ENCODE measurements at regions of chr22 and their contacts with region 1.

Region 1: GRCh38 chr22:19730655-19731360 is 7.5 kb downstream of the GP1BB start:
- DNase-seq: peak; percentile 87 to 93
- ATAC-seq: peak; percentile 89 to 97 (median 91)
- H3K4me3 ChIP-seq: peak overlapping the region; percentile 57
- H3K27ac ChIP-seq: no peak overlapping the region
- H3K4me1 ChIP-seq: no peaks in the 10 kb centered on the region
- H3K27me3 ChIP-seq: no peaks in the 10 kb centered on the region
- CTCF ChIP-seq: peak; percentile 95

Region 2: DNA sequence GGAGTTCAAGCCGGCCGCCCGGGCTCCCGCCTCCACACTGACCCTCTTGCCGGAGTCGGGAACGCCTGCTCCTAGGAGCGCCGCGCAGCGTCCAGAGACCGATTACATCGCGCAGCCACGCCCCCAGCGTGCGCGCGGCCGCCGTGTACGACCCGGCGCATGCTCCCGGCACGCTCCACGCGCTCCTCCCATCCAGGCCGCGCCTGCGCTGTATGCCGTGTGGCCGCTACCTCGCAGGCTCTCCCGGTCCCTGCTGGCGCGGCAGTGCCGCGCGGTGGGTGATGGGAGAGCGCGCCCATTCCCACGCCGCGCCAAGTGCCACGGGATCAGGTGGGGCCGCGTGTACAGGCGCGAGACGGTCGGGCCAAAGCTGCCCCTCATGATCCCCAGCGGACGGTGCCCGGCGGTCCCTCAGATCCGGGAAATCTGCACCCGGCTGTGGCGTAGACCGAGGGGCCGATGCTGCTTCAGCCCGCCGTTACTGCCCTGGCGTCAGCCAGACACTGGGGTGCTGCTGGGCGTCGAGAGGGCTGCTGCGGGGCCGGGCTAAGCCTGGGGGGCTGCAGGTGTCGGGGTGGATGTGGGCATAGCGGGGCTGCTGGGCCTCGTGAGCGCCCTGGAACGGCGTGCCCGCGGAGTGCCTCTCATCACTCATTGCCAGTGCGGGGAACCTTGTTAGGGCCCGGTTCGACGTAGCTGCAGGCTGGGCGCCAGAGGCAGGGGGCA is 124.1 kb after region 1 on chr22 and contains the starts of genes GNB1L and RTL10:
- intact Hi-C with region 1: loop called in 1 of 2 experiments (anchors 5 kb)
- DNase-seq: peak; percentile 98 to 99
- ATAC-seq: peak; percentile 97 to 98 (median 97)
- H3K4me3 ChIP-seq: peak within 1 kb of the TSS; percentile 75
- H3K27ac ChIP-seq: peak within 1 kb of the TSS; percentile 89
- H3K4me1 ChIP-seq: peaks cover 15% of the 10 kb centered on the region
- H3K27me3 ChIP-seq: no peaks in the 10 kb centered on the region
- CTCF ChIP-seq: no peak
- total RNA-seq, gene GNB1L: 1.5 to 3.4 (median 3.0) TPM
- total RNA-seq, gene RTL10: 5.3 to 9.7 (median 8.1) TPM

Region 3: DNA sequence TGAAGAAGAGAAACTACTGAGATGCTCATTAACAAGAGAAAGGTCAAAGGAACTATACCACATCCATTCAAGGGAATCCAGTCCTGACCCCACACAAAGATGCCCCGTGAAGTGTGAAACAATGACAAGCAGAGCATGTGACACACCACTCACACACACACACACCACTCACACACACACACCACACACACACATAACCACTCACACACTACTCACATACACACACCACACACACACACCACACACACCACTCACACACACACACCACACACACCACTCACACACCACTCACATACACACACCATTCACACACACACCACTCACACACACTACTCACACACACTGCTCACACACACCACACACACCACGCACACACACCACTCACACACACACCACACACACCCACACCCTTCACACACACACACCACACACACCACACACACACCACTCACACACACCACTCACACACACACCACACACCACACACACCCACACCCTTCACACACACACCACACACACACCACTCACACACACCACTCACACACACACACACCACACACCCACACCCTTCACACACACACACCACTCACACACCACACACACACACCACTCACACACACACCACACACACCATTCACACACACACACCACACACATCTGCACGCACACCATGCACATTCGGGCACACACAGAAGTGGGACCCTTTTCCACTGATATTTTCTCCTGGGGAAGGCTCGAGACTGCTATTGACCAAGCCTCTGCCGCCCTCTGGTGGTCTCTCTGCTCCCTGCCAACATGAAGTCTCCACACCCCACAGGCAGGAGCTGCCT is 178.8 kb after region 1 on chr22:
- intact Hi-C with region 1: loop called (anchors 1 kb)
- DNase-seq: peak; percentile 84 to 92
- ATAC-seq: peak; percentile 89 to 96 (median 94)
- H3K4me3 ChIP-seq: no peak overlapping the region
- H3K27ac ChIP-seq: no peak overlapping the region
- H3K4me1 ChIP-seq: no peaks in the 10 kb centered on the region
- H3K27me3 ChIP-seq: no peaks in the 10 kb centered on the region
- CTCF ChIP-seq: peak; percentile 86